Activated CD4-positive, alpha-beta memory T cell treated with anti-CD3 and anti-CD28 coated beads for 36 hours (primary cell): ENCODE measurements at regions of chr14 and their contacts with region 1.

Region 1: GRCh38 chr14:49982501-49982951 is 89.6 kb downstream of the ARF6 start:
- DNase-seq: peak; percentile 44
- H3K4me3 Mint-ChIP-seq: peak overlapping the region; percentile 54
- H3K27ac Mint-ChIP-seq: peak overlapping the region; percentile 82
- H3K4me1 Mint-ChIP-seq: peaks cover 81% of the 10 kb centered on the region
- H3K27me3 Mint-ChIP-seq: no peaks in the 10 kb centered on the region

Region 2: DNA sequence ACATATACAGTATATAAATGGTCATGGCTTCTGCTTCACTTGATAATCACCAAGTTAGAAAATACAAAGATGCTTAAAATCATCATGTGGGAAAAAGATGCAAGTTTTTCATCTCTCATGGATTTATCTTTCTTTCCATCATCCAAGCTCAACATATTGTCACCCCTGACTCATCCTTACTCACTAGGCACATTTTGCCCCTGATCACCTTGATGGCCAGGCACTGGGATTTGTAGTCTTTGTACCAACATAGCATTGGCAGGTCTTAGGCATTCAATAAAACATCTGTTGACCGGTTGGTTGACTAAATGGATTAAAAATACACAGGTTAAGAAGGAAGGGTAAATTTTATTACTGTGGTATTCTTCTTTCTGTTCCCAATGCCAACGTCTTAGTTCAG is 186.5 kb before region 1 on chr14:
- CTCF ChIA-PET with region 1: no interaction called
- POLR2A ChIA-PET with region 1: no interaction called
- intact Hi-C with region 1: no loop called
- DNase-seq: no peak
- H3K4me3 Mint-ChIP-seq: no peak overlapping the region
- H3K27ac Mint-ChIP-seq: peak overlapping the region; percentile 30
- H3K4me1 Mint-ChIP-seq: peaks cover 2% of the 10 kb centered on the region
- H3K27me3 Mint-ChIP-seq: no peaks in the 10 kb centered on the region

Region 3: GRCh38 chr14:49886523-49886922 is 96.0 kb before region 1 on chr14:
- CTCF ChIA-PET with region 1: no interaction called
- POLR2A ChIA-PET with region 1: no interaction called
- intact Hi-C with region 1: no loop called
- DNase-seq: peak; percentile 26
- H3K4me3 Mint-ChIP-seq: no peak overlapping the region
- H3K27ac Mint-ChIP-seq: peak overlapping the region; percentile 13
- H3K4me1 Mint-ChIP-seq: peaks cover 21% of the 10 kb centered on the region
- H3K27me3 Mint-ChIP-seq: no peaks in the 10 kb centered on the region

Region 4: DNA sequence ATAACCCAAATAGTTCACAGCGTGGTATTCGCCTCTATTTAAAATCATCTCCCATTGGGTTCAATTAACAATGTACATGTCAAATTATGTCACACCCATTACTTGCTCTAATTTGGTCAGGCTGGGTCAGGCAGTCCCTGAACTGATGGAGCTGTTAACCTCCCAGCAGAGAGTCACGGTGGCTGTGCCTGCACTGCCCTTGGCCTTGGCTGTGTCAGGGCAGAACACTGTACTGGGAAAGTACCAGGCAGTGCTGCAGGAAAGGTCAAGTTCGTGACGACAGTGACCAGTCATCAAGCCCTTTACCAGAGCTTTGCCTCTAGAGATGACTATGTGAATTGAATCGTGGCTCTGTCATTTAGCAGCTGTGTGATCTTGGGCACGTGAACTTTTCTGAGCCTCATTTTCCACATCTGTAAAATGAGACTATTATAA is 10.4 kb after region 1 on chr14:
- CTCF ChIA-PET with region 1: no interaction called
- POLR2A ChIA-PET with region 1: interaction called, 4 read pairs
- intact Hi-C with region 1: loop called (anchors 1 kb)
- DNase-seq: peak; percentile 81
- H3K4me3 Mint-ChIP-seq: peak overlapping the region; percentile 65
- H3K27ac Mint-ChIP-seq: peak overlapping the region; percentile 80
- H3K4me1 Mint-ChIP-seq: peaks cover 34% of the 10 kb centered on the region
- H3K27me3 Mint-ChIP-seq: no peaks in the 10 kb centered on the region

Region 5: GRCh38 chr14:50023671-50024490 is 41.4 kb after region 1 on chr14:
- CTCF ChIA-PET with region 1: no interaction called
- POLR2A ChIA-PET with region 1: interaction called, 3 read pairs
- intact Hi-C with region 1: loop called (anchors 1 kb)
- DNase-seq: no peak
- H3K4me3 Mint-ChIP-seq: no peak overlapping the region
- H3K27ac Mint-ChIP-seq: peak overlapping the region; percentile 31
- H3K4me1 Mint-ChIP-seq: peaks cover 43% of the 10 kb centered on the region
- H3K27me3 Mint-ChIP-seq: no peaks in the 10 kb centered on the region

Region 6: DNA sequence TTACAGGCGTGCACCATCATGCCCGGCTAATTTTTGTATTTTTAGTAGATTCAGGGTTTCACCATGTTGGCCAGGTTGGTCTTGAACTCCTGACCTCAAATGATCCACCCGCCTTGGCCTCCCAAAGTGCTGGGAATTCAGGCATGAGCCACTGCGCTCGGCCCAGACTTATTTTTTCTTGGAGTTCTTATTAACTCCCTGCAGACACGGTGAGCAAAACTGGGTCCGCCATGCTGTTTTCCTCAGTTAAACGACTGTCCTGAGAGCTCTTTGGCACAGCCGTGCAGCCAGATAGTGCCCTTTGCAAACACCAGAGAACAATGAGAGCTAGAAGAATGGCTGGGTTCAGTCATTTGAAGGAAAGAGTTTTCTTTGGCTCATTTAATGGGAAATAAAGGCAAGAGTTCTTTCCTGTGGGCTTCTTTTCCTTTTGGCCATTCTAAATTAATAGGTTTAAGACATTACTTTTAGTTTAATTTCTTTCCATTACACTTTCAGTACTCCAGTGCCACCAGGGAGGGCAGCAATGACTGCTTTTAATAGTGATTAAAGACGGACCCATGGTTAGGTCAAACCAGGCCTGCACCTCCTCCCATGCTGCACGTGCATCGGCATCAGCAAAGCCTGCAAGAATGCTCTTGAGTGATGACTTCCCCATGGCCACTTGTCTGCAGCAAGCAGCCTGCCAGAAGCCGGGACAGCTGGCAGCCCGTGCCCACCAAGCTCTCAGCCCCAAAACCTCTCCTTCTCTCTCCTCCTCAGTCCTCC is 73.1 kb after region 1 on chr14:
- CTCF ChIA-PET with region 1: no interaction called
- POLR2A ChIA-PET with region 1: no interaction called
- intact Hi-C with region 1: no loop called
- DNase-seq: no peak
- H3K4me3 Mint-ChIP-seq: no peak overlapping the region
- H3K27ac Mint-ChIP-seq: no peak overlapping the region
- H3K4me1 Mint-ChIP-seq: peaks cover 24% of the 10 kb centered on the region
- H3K27me3 Mint-ChIP-seq: no peaks in the 10 kb centered on the region